ENCODE measurements at regions of chr2 and their contacts with region 1.

Region 1: DNA sequence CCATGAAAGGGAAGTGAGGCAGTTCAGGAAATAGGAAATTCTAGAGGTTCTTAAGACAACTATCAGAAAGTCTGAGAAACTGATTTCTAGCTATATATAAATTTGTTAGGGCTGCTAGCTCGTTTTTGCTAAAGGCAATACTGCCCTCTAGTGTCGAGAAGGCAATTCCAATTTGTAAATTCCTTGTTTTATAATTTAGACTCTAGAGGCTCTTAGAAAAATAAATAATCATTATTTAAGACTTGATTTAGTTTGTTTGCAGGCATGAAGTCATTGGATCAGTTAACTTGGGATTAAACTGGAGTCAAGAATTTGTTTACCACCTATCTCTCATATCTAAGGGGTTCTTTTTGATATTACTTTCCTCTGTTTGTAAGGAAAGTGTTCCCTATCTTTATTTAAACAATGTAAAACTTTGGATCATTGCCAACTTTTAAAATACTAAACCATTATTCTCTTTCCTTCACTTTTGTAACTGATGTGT is 66.2 kb downstream of the ACVR2A start:
- DNase-seq: peak; percentile 54
- ATAC-seq: peak; percentile 55
- H3K4me3 ChIP-seq: no peak overlapping the region
- H3K27ac ChIP-seq: no peak overlapping the region
- H3K4me1 ChIP-seq: no peaks in the 10 kb centered on the region
- H3K27me3 ChIP-seq: no peaks in the 10 kb centered on the region
- CTCF ChIP-seq: peak; percentile 73
- EP300 ChIP-seq: no peak
- POLR2A ChIP-seq: no peak
- RAD21 ChIP-seq: peak; percentile 74

Region 2: DNA sequence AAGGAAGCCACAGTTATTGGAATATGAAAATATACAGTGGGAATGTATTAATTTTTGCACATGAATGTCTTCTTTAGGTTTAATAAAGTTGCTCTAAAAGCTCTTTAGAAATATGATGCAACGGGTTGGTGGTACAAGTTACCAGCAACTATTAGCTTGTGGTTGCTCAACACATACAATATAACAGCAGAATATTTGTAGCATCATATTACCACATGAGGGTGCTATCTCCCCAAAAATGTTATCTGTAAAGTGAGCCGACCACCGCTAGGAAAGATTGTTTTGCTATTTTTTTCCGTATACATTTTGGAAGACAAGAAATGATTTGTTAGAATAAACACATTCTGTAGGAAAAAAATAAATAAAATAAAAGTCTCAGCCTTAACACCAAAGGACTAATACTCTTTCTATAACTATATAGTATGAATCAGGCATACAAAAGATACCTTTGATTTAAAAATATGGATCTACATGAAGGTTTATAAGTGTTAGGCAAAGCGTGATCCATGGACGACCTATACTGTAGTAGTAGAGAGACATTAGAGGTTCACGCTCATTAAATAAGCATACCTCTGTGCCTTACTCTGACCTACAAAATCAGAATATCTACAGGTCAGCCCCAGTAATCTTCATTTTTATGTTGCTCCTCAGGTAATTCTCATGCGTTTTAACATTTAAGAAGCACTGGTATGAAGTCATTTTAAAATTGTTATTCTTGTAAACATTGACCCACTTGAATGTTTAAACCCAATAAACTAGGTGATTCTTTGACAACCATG is 1176.8 kb before region 1 on chr2:
- CTCF ChIA-PET with region 1: no interaction called
- POLR2A ChIA-PET with region 1: no interaction called
- in situ Hi-C with region 1: loop called (anchors 10 kb)
- intact Hi-C with region 1: loop called (anchors 5 kb)
- DNase-seq: peak; percentile 62
- ATAC-seq: peak; percentile 92
- H3K4me3 ChIP-seq: no peak overlapping the region
- H3K27ac ChIP-seq: no peak overlapping the region
- H3K4me1 ChIP-seq: peaks cover 8% of the 10 kb centered on the region
- H3K27me3 ChIP-seq: no peaks in the 10 kb centered on the region
- CTCF ChIP-seq: peak; percentile 76
- EP300 ChIP-seq: no peak
- POLR2A ChIP-seq: no peak
- RAD21 ChIP-seq: peak; percentile 61; the same call in 1 of the 2 replicates

Region 3: DNA sequence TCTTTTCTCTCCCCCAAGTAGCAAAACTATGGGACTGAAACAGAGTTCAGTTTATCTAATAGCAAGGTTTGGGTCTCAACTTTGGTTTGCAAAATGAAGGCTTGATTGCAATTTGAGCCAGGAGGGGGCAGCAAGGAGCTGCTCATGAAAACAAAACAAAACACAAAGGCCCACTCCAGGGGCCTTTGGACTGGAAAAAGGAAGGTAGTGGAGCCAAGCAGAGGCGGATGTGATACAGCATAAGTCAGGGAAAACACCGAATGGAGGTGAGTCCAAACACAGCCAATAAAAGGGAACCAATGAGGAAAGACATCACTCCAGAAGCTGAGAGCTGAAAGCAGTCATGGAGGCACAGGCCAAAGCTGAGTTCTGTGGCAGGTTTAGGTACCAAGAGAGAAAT is 865.9 kb before region 1 on chr2:
- CTCF ChIA-PET with region 1: interaction called, 12 read pairs
- POLR2A ChIA-PET with region 1: no interaction called
- in situ Hi-C with region 1: loop called (anchors 10 kb)
- intact Hi-C with region 1: loop called (anchors 1 kb)
- DNase-seq: peak; percentile 45
- ATAC-seq: peak; percentile 92
- H3K4me3 ChIP-seq: no peak overlapping the region
- H3K27ac ChIP-seq: no peak overlapping the region
- H3K4me1 ChIP-seq: peaks cover 4% of the 10 kb centered on the region; the same call in 1 of the 2 replicates
- H3K27me3 ChIP-seq: no peaks in the 10 kb centered on the region
- CTCF ChIP-seq: peak; percentile 70
- EP300 ChIP-seq: no peak
- POLR2A ChIP-seq: no peak
- RAD21 ChIP-seq: peak; percentile 48; the same call in 1 of the 2 replicates

Region 4: DNA sequence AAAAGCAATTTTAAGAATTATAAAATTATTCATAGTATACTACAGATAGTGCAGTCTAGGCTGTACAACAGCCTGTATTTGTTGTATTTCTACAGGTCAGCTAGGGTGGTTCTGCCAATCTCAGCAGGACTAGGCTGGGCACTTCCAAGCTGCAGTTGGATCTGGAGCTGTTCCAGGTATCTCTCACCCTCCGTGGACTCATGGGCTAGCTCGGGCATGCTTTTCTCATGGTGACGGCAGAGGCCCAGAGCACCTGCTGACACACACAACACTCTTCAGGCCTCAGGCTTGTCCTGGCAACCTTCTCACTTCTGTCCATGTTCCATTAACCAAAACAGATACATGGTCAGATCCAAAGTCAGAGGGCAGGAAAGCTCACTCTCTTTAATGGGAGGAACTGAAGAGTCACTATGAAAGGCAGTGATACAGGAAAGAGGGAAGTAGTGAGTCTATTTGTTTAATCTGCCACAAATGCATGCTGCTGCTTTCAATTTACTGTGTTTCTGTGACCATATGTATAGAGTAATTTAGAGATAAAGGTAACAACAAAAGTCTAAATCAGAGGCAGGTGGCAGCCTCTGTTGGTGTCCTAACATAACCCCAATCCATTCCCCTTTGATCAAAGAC is 528.6 kb before region 1 on chr2:
- CTCF ChIA-PET with region 1: no interaction called
- POLR2A ChIA-PET with region 1: no interaction called
- in situ Hi-C with region 1: loop called (anchors 25 kb)
- intact Hi-C with region 1: loop called (anchors 10 kb)
- DNase-seq: no peak
- ATAC-seq: no peak
- H3K4me3 ChIP-seq: no peak overlapping the region
- H3K27ac ChIP-seq: no peak overlapping the region
- H3K4me1 ChIP-seq: no peaks in the 10 kb centered on the region
- H3K27me3 ChIP-seq: no peaks in the 10 kb centered on the region
- CTCF ChIP-seq: no peak
- EP300 ChIP-seq: no peak
- POLR2A ChIP-seq: no peak
- RAD21 ChIP-seq: no peak

Region 5: GRCh38 chr2:147623328-147623727 is 287.7 kb before region 1 on chr2:
- CTCF ChIA-PET with region 1: no interaction called
- POLR2A ChIA-PET with region 1: no interaction called
- in situ Hi-C with region 1: loop called (anchors 25 kb)
- intact Hi-C with region 1: no loop called
- DNase-seq: no peak
- ATAC-seq: no peak
- H3K4me3 ChIP-seq: no peak overlapping the region
- H3K27ac ChIP-seq: no peak overlapping the region
- H3K4me1 ChIP-seq: no peaks in the 10 kb centered on the region
- H3K27me3 ChIP-seq: no peaks in the 10 kb centered on the region
- CTCF ChIP-seq: no peak
- EP300 ChIP-seq: no peak
- POLR2A ChIP-seq: no peak
- RAD21 ChIP-seq: no peak

Region 6: DNA sequence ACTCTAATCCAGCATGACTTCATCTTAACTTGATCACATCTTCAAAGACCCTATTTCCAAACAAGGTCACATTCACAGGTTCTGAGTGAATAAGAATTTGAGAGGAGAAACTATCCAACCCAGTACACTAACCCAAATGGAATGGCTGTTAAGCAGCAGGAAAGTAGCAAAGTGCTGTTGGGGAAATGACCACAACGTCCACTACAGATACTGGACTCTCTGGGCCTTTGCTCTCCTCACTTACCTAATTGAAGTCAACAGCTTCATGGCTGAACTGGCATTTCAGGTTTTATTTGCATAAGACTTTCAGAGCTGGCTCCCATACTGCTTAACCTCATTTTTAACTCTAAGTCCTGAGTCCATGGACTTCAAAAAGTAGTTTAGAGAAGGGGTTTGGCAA is 104.2 kb before region 1 on chr2:
- CTCF ChIA-PET with region 1: no interaction called
- POLR2A ChIA-PET with region 1: no interaction called
- in situ Hi-C with region 1: no loop called
- intact Hi-C with region 1: loop called (anchors 2 kb)
- DNase-seq: no peak
- ATAC-seq: peak; percentile 49
- H3K4me3 ChIP-seq: no peak overlapping the region
- H3K27ac ChIP-seq: no peak overlapping the region
- H3K4me1 ChIP-seq: peaks cover 20% of the 10 kb centered on the region
- H3K27me3 ChIP-seq: no peaks in the 10 kb centered on the region
- CTCF ChIP-seq: no peak
- EP300 ChIP-seq: no peak
- POLR2A ChIP-seq: no peak
- RAD21 ChIP-seq: no peak

Region 7: GRCh38 chr2:147873859-147874483 is 37.1 kb before region 1 on chr2:
- CTCF ChIA-PET with region 1: no interaction called
- POLR2A ChIA-PET with region 1: no interaction called
- in situ Hi-C with region 1: no loop called
- intact Hi-C with region 1: no loop called
- DNase-seq: no peak
- ATAC-seq: no peak
- H3K4me3 ChIP-seq: no peak overlapping the region
- H3K27ac ChIP-seq: no peak overlapping the region
- H3K4me1 ChIP-seq: peaks cover 6% of the 10 kb centered on the region
- H3K27me3 ChIP-seq: no peaks in the 10 kb centered on the region
- CTCF ChIP-seq: no peak
- EP300 ChIP-seq: no peak
- POLR2A ChIP-seq: no peak
- RAD21 ChIP-seq: no peak

Measured in HepG2 (cell line).